Motor neuron (in vitro differentiated cells): ENCODE measurements at regions of chr5 and their contacts with region 1.

Region 1: GRCh38 chr5:142699184-142699720 is 13.4 kb upstream of the FGF1 start:
- ATAC-seq: peak; percentile 64 to 100 (median 98)
- H3K4me3 ChIP-seq: no peak overlapping the region
- H3K27ac ChIP-seq: no peak overlapping the region
- H3K4me1 ChIP-seq: peaks cover 0 to 2% of the 10 kb centered on the region in 2 donors

Region 2: GRCh38 chr5:142024771-142025304 is 674.4 kb before region 1 on chr5:
- in situ Hi-C with region 1: loop called in 1 of 9 experiments (anchors 25 kb)
- ATAC-seq: peak; percentile 100
- H3K4me3 ChIP-seq: peak overlapping the region; percentile 34 to 42 (median 37)
- H3K27ac ChIP-seq: peak overlapping the region; percentile 76 to 91
- H3K4me1 ChIP-seq: peaks cover 0 to 4% of the 10 kb centered on the region in 2 donors

Region 3: GRCh38 chr5:142151436-142152383 is 547.5 kb before region 1 on chr5:
- in situ Hi-C with region 1: loop called in 1 of 9 experiments (anchors 25 kb)
- ATAC-seq: peak in 7 of 8 experiments; percentile 33 to 69 (median 56)
- H3K4me3 ChIP-seq: no peak overlapping the region
- H3K27ac ChIP-seq: no peak overlapping the region
- H3K4me1 ChIP-seq: peaks cover 0 to 6% of the 10 kb centered on the region in 2 donors

Region 4: DNA sequence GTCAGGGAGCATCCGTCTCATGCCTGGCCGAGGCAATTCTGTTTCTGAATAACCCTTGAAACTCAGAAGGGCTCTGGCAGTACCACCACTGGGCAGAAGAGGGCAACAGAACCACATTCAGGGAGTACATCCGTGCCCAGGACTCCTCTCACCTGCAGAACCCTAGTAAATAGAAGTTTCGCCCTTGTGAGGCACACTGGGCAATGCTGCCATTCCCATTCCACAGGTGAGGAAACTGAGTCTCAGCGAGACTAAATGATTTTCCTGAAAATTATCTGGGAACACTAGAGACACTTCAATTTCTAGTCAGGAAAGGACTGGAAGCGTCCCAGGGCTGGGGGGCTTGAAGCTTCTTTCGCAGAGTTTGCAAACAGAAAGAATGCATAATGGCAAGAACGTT is 88.1 kb before region 1 on chr5:
- in situ Hi-C with region 1: loop called in 1 of 9 experiments (anchors 10 kb)
- ATAC-seq: peak; percentile 63 to 95 (median 80)
- H3K4me3 ChIP-seq: no peak overlapping the region
- H3K27ac ChIP-seq: no peak overlapping the region
- H3K4me1 ChIP-seq: peaks cover 0 to 6% of the 10 kb centered on the region in 2 donors

Region 5: DNA sequence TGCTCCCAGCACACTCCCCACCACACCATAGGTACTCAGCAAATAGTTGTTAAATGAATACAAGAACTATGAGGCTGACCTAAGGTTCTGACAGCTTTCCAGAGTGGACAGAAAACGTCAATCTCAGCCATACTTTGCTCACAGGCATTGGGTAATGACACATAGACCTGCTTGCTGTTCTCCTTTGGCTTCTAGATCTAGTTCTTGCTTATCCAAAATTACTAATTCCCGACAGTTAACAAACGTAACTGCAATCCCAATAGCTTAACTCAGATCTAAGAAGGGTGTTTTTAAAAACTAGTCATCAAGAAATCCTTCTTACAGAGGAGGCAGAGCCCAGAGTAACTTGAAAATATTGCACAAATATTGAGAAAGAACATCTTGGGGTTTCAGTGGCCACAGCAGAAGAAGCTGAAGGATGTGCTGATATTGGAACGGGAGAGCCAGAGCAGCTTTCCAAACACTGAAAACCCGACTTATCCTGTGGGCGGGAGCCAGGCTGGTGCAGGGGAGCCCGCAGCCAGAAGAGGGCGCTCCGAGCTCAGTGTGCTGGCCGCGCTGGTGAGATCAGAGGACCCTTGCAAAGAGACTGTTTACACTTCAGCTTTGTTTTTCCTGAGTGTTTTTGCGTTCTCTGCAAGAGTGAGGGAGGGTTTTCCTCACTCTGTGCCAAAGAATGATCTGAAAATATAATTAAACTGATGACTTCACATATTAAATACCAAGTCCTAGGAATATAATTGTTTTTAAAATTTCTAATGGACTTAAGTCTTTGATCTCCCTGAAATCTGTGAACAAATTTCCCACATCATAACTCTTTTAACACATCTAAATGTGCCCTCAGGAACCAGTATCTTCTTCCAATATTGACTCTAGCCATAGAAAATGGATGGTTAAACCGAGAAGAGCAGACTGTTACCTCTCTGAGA is 43.6 kb before region 1 on chr5:
- in situ Hi-C with region 1: loop called in 3 of 9 experiments (anchors 10 kb)
- ATAC-seq: peak; percentile 96 to 100 (median 98)
- H3K4me3 ChIP-seq: no peak overlapping the region
- H3K27ac ChIP-seq: no peak overlapping the region
- H3K4me1 ChIP-seq: no peaks in the 10 kb centered on the region